ENCODE measurements at regions of chr1 and their contacts with region 1.

Region 1: DNA sequence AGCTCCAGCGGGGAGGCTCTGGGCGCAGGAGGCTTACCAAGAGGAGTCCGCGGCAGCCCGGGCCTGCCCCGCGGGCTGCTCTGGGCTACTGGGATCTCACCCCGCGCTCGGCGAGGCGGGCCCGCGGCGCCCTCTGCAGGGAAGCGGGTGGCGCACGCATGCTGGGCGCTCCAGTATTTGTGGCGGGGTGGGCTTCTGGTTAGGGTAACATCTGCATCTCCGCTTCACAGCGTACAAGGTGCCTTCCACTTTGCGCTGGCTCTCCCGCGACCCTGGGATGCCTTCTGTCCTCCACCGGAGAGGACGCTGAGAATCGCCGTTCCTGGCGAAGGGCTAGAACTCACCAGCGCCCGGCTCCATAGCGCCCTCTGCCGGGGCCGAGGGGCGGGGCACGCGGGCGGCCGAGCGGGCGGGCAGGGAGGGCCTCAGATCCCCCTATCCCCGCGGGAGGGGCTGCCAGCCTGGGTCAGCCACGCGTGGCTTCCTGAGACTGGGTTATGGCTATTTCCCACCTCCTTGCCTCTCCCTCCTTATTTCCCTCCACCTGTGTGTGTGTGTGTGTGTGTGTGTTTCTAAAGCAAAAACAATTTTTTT is 46.6 kb upstream of the CTBS start:
- DNase-seq: peak; percentile 90
- ATAC-seq: peak; percentile 95

Region 2: GRCh38 chr1:84573967-84574842 is 46.6 kb before region 1 on chr1 and contains the start of gene CTBS:
- intact Hi-C with region 1: loop called (anchors 2 kb)
- DNase-seq: peak; percentile 95
- ATAC-seq: peak; percentile 99
- total RNA-seq, gene CTBS: 6.0 TPM

Region 3: DNA sequence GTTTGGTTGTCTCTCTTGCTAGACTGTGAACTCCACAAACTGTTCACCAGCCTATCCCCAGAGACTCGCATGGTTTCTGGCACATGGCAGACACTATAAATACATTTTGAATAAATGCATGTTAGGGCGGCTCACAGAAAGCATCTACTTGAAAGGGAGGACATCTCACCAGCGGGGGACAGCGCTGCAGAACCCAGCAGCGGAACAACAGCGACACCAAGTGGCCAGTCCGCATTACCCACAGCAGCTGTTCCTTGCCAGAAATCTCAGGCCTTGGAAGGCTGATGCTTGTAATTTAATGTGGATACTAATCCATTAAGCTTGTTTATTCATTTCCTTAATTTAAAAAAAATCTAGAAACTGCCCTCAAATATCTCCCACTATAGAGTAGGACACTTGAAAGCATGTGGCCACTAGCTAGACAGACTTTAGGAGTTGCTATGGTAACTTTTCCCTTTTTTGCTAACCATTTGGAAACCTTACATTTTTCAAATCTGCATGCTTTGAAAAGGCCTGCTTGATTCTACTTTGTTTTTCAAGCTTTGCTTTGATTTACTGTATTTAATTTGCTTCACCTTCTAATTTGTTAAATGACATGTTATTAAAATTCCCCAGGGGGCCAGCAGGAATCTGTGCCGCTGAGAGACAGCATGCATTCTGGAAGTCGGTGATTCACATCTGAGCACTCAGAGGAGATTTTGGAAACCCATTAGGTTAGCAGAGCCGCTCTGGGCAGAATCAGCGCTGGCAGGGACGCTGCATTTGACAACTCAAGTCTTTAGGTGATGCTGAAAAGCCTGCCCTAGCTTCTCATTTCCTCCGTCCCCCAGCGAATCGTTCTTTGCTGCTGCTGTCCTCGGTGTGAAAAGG is 132.9 kb after region 1 on chr1:
- intact Hi-C with region 1: loop called (anchors 5 kb)
- DNase-seq: peak; percentile 83
- ATAC-seq: peak; percentile 80

Measured in Right ventricle myocardium inferior (tissue), 1 donor.